ENCODE measurements at regions of chr11 and their contacts with region 1.

Region 1: DNA sequence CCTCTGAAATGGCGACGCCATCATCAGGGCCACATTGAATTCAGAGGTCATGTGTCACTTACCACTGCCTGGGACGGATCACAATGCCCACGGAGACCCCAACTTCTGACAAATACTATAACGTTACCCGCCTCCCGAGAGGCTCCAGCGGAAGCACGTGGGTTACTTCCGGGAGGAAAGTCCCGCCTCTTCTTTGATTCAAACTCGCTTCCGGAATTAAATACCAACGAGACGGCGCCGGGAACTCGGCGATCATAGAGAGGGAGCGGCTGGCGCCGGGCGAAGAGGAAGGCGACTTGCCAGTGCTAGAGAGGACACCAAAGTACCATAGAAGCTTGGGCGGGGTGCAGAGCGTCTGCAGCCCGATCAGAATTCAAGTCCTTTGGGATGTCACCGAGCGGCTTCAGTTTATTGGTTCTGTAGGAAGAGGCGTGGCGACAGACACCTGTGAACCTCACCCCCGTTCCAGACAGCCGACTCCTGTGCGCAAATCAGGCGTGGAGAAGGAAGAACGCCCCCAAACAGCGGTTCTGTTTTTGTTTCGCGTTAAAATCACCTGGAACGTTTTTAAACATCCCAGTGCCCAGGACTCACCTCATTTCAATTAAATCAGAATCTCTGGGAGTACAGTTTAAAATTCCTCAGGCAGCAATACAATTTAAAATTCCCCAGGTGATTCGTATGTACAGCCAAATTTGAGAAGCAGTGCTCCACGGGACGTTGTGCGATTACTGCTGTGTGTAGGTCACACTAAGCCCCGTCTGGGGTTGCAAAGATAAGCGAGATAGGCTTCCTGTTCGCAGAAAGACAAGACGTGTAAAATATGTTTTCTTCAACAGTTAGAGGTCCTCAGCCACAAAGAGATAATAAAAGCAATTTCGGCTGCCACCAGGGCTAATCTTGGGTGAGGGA is at the start of gene TIMM10:
- DNase-seq: peak; percentile 98
- H3K4me3 Mint-ChIP-seq: peak within 1 kb of the TSS; percentile 89
- H3K27ac Mint-ChIP-seq: peak within 1 kb of the TSS; percentile 85
- H3K4me1 Mint-ChIP-seq: peaks cover 32% of the 10 kb centered on the region
- H3K27me3 Mint-ChIP-seq: no peaks in the 10 kb centered on the region
- total RNA-seq, gene TIMM10: 108 and 112 TPM in 2 replicates

Region 2: GRCh38 chr11:57335343-57336110 is 195.3 kb before region 1 on chr11 and contains the start of gene SSRP1:
- intact Hi-C with region 1: loop called (anchors 1 kb)
- DNase-seq: peak; percentile 95
- H3K4me3 Mint-ChIP-seq: peak within 1 kb of the TSS; percentile 93
- H3K27ac Mint-ChIP-seq: peak within 1 kb of the TSS; percentile 99
- H3K4me1 Mint-ChIP-seq: peaks cover 35% of the 10 kb centered on the region
- H3K27me3 Mint-ChIP-seq: no peaks in the 10 kb centered on the region
- total RNA-seq, gene SSRP1: 253 and 256 TPM in 2 replicates

Region 3: DNA sequence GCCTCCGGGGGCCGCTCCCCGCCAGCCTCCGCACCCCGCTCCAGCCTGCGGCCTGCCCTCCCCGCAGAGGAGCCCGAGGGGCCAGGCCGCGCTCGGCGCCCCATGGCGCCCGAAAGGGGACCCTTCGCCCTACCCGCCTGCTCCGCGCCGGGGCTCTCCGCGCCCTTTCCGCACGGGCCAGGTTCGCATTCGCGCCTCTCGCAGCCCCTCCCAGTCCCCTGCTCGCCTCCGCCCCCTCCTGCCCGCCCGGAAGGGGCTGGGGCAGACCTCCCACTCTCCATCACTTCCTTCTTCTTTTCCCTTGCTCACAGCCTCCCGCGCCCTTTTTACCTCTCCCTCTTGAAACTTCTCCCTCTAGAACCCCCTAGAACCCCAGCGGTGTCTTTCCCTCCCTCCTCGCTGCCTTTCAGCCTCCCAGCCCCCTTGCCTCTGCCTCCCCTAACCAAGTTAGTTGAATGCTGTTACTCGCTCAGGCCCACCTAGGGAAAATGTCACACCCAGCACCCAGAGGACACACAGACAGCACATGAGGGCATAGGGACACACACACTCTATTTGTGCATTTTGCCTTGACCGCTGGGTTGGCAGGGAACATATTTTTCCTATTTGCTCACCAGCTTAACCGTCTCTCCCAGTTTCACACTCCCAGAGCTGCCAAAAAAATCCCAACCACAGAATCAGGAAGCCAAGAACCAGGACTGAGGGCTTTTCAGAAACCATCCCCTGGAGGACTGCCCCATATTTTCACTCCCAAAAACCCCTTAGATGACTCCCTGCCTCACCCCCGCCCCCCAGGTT is 103.7 kb before region 1 on chr11 and contains the start of gene SLC43A3:
- intact Hi-C with region 1: loop called (anchors 1 kb)
- DNase-seq: peak; percentile 91
- H3K4me3 Mint-ChIP-seq: peak within 1 kb of the TSS; percentile 96
- H3K27ac Mint-ChIP-seq: peak within 1 kb of the TSS; percentile 95
- H3K4me1 Mint-ChIP-seq: peaks cover 43% of the 10 kb centered on the region
- H3K27me3 Mint-ChIP-seq: peaks cover 9% of the 10 kb centered on the region
- total RNA-seq, gene SLC43A3: 255 and 261 TPM in 2 replicates

Region 4: GRCh38 chr11:57493507-57494503 is 37.0 kb before region 1 on chr11:
- intact Hi-C with region 1: loop called (anchors 1 kb)
- DNase-seq: peak; percentile 92
- H3K4me3 Mint-ChIP-seq: no peak overlapping the region
- H3K27ac Mint-ChIP-seq: peak overlapping the region; percentile 73
- H3K4me1 Mint-ChIP-seq: peaks cover 8% of the 10 kb centered on the region
- H3K27me3 Mint-ChIP-seq: no peaks in the 10 kb centered on the region

Region 5: DNA sequence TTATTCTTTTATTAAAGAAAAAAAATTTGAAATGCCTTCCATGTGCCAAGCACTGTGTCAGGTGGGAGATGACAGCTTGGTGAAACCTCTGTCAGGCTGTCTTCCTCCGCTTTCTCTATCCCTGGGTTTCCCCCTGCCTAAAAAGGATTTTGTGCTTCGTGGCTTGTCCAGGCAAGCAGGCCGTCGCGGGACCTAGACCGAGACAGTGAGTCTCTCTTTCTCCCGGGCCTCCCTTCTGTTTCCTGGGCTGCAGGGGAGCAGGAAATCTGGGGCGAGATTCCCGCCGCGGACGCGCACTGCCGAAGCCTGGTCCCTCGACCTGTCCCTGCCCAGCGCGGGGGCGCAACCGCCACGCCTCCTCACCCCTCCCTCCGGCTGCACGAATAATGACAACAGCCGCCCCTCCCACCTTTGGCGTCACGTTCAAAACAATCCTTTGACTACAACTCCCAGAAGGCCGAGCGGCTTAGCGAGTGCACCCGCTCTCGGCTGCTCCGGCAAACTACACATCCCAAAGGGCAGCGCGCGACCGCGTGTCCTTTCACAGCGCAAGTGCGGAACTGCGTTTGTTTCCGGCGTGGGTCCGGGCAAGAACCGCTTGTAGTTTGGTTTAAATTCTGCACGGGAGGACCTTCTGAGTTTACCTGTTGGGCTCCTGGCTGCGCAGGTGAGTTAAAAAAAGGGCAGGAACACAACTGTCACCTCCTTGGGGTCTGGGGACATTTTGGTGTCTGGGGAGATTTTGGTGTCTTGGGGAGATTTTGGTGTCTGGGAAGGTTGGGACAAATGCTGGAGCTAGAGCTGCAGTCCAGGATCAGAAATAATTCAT is 126.6 kb after region 1 on chr11 and contains the start of gene CLP1:
- intact Hi-C with region 1: loop called (anchors 1 kb)
- DNase-seq: peak; percentile 100
- H3K4me3 Mint-ChIP-seq: peak within 1 kb of the TSS; percentile 86
- H3K27ac Mint-ChIP-seq: peak within 1 kb of the TSS; percentile 88
- H3K4me1 Mint-ChIP-seq: peaks cover 18% of the 10 kb centered on the region
- H3K27me3 Mint-ChIP-seq: no peaks in the 10 kb centered on the region
- total RNA-seq, gene CLP1: 18.5 and 19.8 TPM in 2 replicates

Region 6: DNA sequence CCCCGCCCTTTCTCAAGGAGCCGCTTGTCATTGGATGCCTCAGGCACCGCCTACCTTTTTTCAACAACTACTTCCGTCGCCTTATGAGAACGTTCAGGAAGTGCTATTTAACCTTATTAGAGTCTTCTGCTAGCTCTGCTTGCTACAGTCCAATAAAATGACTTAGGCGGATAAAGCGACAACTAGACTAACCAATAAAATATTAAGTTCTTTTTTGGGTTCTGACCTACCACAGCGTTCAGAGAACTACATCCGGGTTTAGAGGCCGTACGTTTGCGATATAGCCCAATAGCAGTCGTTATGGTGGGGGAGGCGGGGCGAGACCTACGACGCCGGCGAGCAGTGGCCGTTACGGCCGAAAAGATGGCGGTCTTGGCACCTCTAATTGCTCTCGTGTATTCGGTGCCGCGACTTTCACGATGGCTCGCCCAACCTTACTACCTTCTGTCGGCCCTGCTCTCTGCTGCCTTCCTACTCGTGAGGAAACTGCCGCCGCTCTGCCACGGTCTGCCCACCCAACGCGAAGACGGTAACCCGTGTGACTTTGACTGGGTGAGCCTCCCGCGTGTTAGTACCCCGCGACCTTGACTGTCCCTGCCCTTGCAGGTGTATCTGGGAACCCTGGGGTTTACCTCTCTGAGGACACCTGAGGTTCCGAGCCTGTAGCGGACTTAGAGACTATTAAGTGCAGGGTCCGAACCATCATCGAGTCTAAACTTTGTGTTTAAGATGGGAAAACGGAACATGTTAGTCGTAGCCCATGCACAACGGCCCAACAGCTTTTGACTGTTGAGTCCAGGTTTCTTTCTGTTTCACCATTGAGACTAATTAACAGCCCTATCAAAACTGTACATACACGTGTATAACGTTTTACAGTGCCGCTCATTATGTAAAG is 181.7 kb after region 1 on chr11 and contains the start of gene TMX2:
- intact Hi-C with region 1: loop called (anchors 1 kb)
- DNase-seq: peak; percentile 97
- H3K4me3 Mint-ChIP-seq: peak within 1 kb of the TSS; percentile 95
- H3K27ac Mint-ChIP-seq: peak within 1 kb of the TSS; percentile 96
- H3K4me1 Mint-ChIP-seq: peaks cover 39% of the 10 kb centered on the region
- H3K27me3 Mint-ChIP-seq: no peaks in the 10 kb centered on the region
- total RNA-seq, gene TMX2: 99.0 and 99.2 TPM in 2 replicates

Measured in activated CD4-positive, alpha-beta T cell treated with anti-CD3 and anti-CD28 coated beads, Interleukin-2, amount 10 ng/mL, durations not matched to agents 24 days and 14 days (primary cell).